Left colon (tissue), 2 donors: ENCODE measurements at regions of chrX and their contacts with region 1.

Region 1: DNA sequence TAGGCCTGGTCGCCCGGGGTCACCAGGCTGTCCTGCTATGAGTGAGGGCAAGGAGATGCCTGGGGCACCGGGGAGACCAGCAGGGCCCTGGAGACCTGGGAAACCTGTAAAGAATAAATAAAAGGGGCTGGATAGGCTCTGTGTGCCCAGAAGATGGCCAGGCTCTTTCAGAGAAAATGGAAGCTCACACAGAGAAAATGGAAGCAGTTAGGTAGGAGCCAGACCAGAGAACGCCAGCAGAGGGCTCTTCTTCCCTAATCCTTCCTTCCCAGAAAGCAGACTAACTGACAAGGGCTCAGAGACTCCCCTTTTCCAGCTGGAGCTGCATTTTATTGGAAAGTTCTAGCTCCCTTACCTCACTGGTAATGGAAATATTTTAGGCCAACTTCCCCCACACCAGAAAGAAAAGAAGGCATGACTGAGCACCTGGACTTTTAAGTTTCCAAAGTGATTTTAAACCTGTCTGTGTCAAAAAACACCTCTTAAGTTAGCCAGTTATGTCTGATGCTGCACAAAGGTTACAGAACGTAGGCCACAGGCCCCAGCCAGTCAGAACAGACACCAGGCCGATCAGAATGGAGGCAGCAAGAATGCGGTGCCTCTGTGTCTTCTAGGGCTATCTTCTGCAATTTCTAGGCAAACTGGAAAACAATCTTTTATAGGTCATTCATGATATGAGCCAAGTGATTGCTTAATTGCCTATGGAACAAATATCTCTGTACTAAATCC is 74.0 kb downstream of the ATG4A start:
- DNase-seq: peak in 1 of 2 donors; percentile 16
- ATAC-seq: peak; percentile 53

Region 2: DNA sequence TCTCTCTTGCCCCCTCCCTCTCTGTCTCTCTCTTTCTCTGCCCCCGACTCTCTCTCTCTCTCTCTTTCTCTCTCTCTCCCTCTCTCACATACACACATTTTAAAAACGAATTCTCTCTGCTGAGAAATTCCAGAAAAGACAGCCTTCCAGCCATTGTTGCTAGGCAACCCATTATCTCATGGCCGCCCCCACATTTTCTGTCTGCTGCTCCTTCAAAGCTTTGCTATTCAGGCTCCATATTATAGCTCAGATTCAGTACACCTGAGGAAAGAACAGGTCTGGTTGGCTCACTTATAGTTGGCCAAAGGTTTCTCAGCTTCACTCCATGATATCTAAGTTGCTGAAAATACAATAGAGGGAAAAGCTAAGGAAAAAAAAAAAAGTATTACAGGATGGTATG is 1728.1 kb before region 1 on chrX:
- intact Hi-C with region 1: loop called in 1 of 2 experiments (anchors 5 kb)
- DNase-seq: no peak
- ATAC-seq: no peak

Region 3: GRCh38 chrX:108332281-108332680 is 166.7 kb after region 1 on chrX:
- intact Hi-C with region 1: no loop called
- DNase-seq: no peak
- ATAC-seq: no peak